Panc1 (cell line): ENCODE measurements at regions of chr6 and their contacts with region 1.

Region 1: GRCh38 chr6:73565767-73566485 is 45.1 kb upstream of the EEF1A1 start:
- DNase-seq: no peak
- ATAC-seq: peak; percentile 70
- H3K4me3 ChIP-seq: no peak overlapping the region
- H3K27ac ChIP-seq: peak overlapping the region; percentile 82
- H3K4me1 ChIP-seq: peaks cover 21% of the 10 kb centered on the region
- H3K27me3 ChIP-seq: no peaks in the 10 kb centered on the region
- CTCF ChIP-seq: no peak

Region 2: GRCh38 chr6:73532293-73532692 is 33.6 kb before region 1 on chr6:
- CTCF ChIA-PET with region 1: no interaction called
- POLR2A ChIA-PET with region 1: interaction called, 10 read pairs
- in situ Hi-C with region 1: no loop called
- intact Hi-C with region 1: no loop called
- DNase-seq: no peak
- ATAC-seq: no peak
- H3K4me3 ChIP-seq: no peak overlapping the region
- H3K27ac ChIP-seq: no peak overlapping the region
- H3K4me1 ChIP-seq: no peaks in the 10 kb centered on the region
- H3K27me3 ChIP-seq: no peaks in the 10 kb centered on the region
- CTCF ChIP-seq: no peak